ENCODE measurements at regions of chr7 and their contacts with region 1.

Region 1: GRCh38 chr7:141864775-141865447 is 23.6 kb upstream of the PRSS37 start:
- DNase-seq: no peak
- ATAC-seq: no peak
- H3K4me3 ChIP-seq: no peak overlapping the region
- H3K27ac ChIP-seq: no peak overlapping the region
- H3K4me1 ChIP-seq: no peaks in the 10 kb centered on the region
- H3K27me3 ChIP-seq: no peaks in the 10 kb centered on the region
- CTCF ChIP-seq: no peak

Region 2: DNA sequence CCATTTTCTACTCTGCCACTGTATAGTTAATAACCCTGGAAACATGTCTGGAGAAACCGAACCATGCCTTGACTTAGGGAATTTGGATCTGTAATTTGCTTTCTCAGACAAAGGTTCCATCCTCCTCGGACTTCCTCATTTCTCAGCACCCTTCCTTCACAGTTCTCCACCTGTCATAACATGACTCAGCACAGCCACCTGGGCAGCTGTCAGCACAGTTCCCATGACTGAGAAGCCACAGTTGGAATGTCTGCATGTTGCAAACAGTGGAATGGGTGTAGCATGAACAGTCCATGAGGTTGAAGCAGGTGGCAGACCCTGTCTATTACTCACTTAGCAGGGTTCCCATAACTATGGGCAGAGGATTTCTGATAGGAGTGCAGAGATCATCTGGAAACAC is 50.7 kb after region 1 on chr7:
- intact Hi-C with region 1: loop called in 1 of 10 experiments (anchors 5 kb)
- DNase-seq: no peak
- ATAC-seq: no peak
- H3K4me3 ChIP-seq: no peak overlapping the region
- H3K27ac ChIP-seq: no peak overlapping the region
- H3K4me1 ChIP-seq: no peaks in the 10 kb centered on the region
- H3K27me3 ChIP-seq: no peaks in the 10 kb centered on the region
- CTCF ChIP-seq: no peak

Region 3: DNA sequence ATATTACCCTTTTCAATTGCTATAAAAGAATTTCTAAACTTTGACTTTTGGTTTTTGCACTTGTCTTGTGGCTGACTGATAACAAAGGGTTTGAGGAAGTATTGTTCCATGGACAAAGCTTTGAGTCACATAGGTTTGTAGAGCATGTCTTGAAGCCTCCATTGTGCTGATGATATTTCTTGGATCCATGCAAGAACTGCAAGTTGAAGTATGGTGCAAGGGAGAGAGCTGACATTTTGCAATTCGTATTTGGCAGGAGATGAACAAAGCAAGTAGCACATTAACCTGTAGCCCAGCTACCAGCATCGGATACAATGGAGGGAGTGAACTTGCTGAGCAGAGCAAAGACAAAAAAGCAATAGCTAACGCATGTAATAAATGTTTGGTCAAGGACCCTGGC is 270.0 kb after region 1 on chr7:
- intact Hi-C with region 1: no loop called
- DNase-seq: no peak
- ATAC-seq: no peak
- H3K4me3 ChIP-seq: no peak overlapping the region
- H3K27ac ChIP-seq: no peak overlapping the region
- H3K4me1 ChIP-seq: no peaks in the 10 kb centered on the region
- H3K27me3 ChIP-seq: no peaks in the 10 kb centered on the region
- CTCF ChIP-seq: no peak

Measured in heart right ventricle (tissue), 16 donors.